Natural killer cell (primary cell): ENCODE measurements at regions of chr4 and their contacts with region 1.

Region 1: GRCh38 chr4:173025131-173025530 is 143.5 kb upstream of the GALNT7 start:
- DNase-seq: peak in 1 of 2 donors; percentile 63
- ATAC-seq: peak in 2 of 3 donors; percentile 29 to 60
- H3K4me3 ChIP-seq: no peak overlapping the region
- H3K4me3 Mint-ChIP-seq: no peak overlapping the region
- H3K27ac ChIP-seq: no peak overlapping the region
- H3K27ac Mint-ChIP-seq: no peak overlapping the region
- H3K4me1 ChIP-seq: no peaks in the 10 kb centered on the region
- H3K4me1 Mint-ChIP-seq: peaks cover 0 to 5% of the 10 kb centered on the region in 2 donors
- H3K27me3 ChIP-seq: no peaks in the 10 kb centered on the region
- H3K27me3 Mint-ChIP-seq: peaks cover 0 to 2% of the 10 kb centered on the region in 2 donors
- CTCF ChIP-seq: peak; percentile 19

Region 2: DNA sequence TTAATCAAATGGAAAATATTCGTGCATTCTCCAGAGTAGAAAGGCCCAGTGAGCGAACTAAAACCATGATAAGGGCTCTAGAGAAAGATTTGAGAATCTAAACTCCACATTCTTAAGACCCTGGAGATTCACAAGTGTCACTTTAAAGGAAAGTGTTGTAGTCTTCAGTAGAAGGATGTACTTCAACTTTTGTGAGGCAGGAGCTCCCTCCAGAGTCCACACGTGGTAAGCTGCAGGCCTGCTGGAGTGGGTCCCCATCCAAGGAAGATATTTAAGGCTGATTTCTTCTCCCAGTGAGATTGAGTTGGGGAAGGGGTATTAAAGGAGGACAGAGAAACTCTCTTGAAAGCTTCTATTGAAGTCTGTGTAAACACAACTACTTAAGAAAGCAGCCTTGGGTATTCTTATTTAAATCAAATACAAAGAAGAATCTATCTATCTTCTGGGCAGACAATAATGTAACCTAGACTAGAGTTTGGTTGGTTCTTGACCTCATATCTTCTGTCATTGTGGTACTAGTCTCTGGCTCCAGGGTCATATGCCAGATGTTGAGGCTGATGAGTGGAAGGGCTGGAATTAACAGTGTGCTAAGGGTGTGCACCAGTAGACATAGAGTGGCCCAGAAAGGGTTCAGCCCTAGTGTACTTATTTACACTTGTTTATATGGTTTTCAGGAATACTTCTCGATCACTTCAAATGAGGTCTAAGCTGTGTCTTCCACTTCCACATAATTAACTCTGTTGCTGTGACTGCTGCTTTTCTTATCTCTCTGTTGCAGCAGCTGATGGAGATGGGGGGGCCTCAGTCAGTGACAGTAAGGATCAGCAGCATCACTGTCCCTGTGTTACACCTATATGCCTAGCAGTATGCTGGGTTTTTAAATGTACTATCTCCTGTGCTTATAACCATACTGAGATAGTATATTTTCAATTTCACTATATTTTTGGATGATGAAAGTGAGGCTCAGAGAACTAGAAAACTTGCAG is 232.9 kb after region 1 on chr4:
- intact Hi-C with region 1: loop called (anchors 1 kb)
- DNase-seq: peak in 1 of 2 donors; percentile 76
- ATAC-seq: peak; percentile 65 to 84 (median 68)
- H3K4me3 ChIP-seq: no peak overlapping the region
- H3K4me3 Mint-ChIP-seq: no peak overlapping the region
- H3K27ac ChIP-seq: no peak overlapping the region
- H3K27ac Mint-ChIP-seq: no peak overlapping the region
- H3K4me1 ChIP-seq: no peaks in the 10 kb centered on the region
- H3K4me1 Mint-ChIP-seq: peaks cover 11 to 15% of the 10 kb centered on the region in 2 donors
- H3K27me3 ChIP-seq: no peaks in the 10 kb centered on the region
- H3K27me3 Mint-ChIP-seq: no peaks in the 10 kb centered on the region
- CTCF ChIP-seq: peak; percentile 57

Region 3: GRCh38 chr4:173301518-173302201 is 276.5 kb after region 1 on chr4:
- intact Hi-C with region 1: loop called (anchors 1 kb)
- DNase-seq: peak in 1 of 2 donors; percentile 58
- ATAC-seq: peak in 1 of 3 donors; percentile 48
- H3K4me3 ChIP-seq: no peak overlapping the region
- H3K4me3 Mint-ChIP-seq: no peak overlapping the region
- H3K27ac ChIP-seq: no peak overlapping the region
- H3K27ac Mint-ChIP-seq: no peak overlapping the region
- H3K4me1 ChIP-seq: no peaks in the 10 kb centered on the region
- H3K4me1 Mint-ChIP-seq: peaks cover 6% of the 10 kb centered on the region in 2 donors
- H3K27me3 ChIP-seq: no peaks in the 10 kb centered on the region
- H3K27me3 Mint-ChIP-seq: no peaks in the 10 kb centered on the region
- CTCF ChIP-seq: peak; percentile 81